Prostate gland (tissue), 2 donors: ENCODE measurements at regions of chr6 and their contacts with region 1.

Region 1: DNA sequence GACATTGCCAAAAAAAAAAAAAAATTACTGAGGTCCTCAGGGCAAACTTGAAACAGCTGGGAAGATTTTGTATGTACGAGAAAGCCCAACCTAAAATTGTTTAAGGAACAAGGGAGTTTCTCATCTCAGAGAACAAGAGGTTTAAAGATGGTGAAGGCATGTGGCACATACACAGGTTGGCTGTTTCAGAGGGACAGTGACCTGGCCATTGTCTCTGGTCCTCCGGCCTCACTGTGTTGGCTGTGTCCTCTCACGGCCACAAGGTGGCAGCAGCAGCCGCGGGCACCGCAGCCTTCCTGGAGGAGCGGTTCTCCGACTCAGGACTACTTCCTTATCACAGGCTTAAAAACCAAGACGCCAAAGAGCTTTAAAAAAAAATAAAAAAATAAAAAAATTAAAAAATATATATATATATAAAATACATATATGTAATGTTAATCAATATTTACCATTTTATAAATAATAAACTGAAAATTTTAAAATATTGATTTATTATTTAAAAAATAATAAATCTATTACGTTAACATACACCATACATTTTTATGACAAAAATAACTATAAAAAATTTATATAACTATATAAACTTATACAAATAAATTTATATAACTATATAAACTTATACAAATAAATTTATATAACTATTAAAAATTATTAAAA is 52.8 kb downstream of the GTF2H5 start:
- DNase-seq: peak; percentile 73
- H3K4me3 ChIP-seq: no peak overlapping the region
- H3K27ac ChIP-seq: no peak overlapping the region
- H3K4me1 ChIP-seq: no peaks in the 10 kb centered on the region
- H3K27me3 ChIP-seq: no peaks in the 10 kb centered on the region
- CTCF ChIP-seq: peak; percentile 84 to 93 (median 91)
- POLR2A ChIP-seq: no peak

Region 2: DNA sequence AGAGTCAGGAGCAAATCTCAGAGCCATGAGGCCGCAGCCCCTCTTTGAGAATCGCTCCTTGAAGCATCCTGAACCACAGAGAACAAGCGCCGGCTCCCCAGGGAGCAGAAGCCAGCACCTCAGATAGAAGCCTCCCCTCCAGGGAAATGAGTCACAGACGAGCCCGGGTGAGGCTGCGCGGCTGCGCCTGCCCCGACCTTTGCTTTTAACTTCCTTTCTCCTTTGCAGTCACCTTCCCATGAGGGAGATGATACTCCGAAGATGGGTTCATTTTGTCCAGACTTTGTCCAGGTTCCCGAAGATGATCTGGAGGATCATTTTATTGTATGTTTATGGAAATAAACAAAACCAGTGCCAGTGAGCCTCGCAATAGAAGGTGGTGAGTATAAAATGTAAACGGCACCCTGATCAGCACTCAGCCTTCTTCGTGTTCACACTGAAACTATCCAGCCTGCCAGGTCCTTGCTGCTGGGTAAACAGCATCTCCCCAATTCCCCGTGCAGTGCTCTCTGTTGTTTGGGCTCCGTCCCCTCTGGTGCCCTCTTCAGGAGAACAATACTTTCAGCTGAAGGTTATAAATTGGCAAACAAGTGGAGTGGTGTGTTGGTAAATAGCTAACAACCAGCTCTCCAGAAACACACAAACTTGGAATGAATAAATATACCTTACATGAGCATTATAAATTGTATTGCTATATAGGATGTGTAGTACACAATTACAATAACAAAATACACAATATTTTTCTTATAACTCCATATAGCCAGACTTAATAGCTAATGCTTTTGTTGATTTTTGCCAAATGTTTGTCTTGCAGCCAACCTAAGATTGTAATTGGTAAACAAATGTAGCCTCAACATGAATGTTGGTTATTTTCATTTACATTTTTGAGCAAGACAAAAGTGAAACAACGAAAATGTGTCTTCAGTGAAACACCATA is 297.5 kb after region 1 on chr6:
- intact Hi-C with region 1: loop called (anchors 2 kb)
- DNase-seq: peak; percentile 55
- H3K4me3 ChIP-seq: no peak overlapping the region
- H3K27ac ChIP-seq: no peak overlapping the region
- H3K4me1 ChIP-seq: no peaks in the 10 kb centered on the region
- H3K27me3 ChIP-seq: no peaks in the 10 kb centered on the region
- CTCF ChIP-seq: peak; percentile 9 to 65 (median 52)
- POLR2A ChIP-seq: no peak

Region 3: DNA sequence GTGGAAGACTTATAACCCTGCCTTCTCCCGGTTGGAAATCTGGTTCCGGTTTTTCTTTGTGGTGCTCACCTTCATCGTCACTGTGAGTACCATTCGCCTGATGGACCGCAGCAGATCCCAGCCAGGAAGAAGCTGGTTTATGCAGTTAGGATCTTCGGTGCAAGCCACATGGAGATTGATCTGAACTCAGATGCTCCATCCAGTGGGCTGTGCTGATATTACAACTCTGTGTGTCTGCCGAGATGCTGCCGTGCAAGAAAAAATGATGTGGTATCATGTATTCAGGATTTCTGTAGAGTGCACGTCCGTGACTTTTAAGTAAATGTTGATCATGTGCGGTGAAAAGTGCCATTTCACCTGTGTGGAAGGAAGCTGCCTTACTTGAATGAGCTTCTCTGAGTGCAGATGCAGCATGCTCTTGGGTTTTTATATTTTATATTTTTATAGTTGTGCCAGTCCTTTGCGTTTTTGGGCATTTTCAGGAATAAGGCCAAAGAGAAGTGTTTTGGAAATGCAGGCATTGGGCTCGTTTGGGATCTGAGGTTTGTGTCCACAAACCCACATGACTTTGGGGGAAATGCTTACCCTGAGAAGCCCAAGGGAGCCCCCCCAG is 384.5 kb after region 1 on chr6:
- intact Hi-C with region 1: loop called (anchors 5 kb)
- DNase-seq: peak; percentile 55
- H3K4me3 ChIP-seq: no peak overlapping the region
- H3K27ac ChIP-seq: no peak overlapping the region
- H3K4me1 ChIP-seq: no peaks in the 10 kb centered on the region
- H3K27me3 ChIP-seq: no peaks in the 10 kb centered on the region
- CTCF ChIP-seq: peak in 3 of 4 experiments; percentile 50 to 83 (median 70)
- POLR2A ChIP-seq: no peak

Region 4: GRCh38 chr6:158686791-158687381 is 466.0 kb after region 1 on chr6:
- intact Hi-C with region 1: loop called (anchors 5 kb)
- DNase-seq: no peak
- H3K4me3 ChIP-seq: no peak overlapping the region
- H3K27ac ChIP-seq: peak overlapping the region in 1 of 2 donors; percentile 26
- H3K4me1 ChIP-seq: no peaks in the 10 kb centered on the region
- H3K27me3 ChIP-seq: no peaks in the 10 kb centered on the region
- CTCF ChIP-seq: no peak
- POLR2A ChIP-seq: no peak